ENCODE measurements at regions of chr9 and their contacts with region 1.

Region 1: DNA sequence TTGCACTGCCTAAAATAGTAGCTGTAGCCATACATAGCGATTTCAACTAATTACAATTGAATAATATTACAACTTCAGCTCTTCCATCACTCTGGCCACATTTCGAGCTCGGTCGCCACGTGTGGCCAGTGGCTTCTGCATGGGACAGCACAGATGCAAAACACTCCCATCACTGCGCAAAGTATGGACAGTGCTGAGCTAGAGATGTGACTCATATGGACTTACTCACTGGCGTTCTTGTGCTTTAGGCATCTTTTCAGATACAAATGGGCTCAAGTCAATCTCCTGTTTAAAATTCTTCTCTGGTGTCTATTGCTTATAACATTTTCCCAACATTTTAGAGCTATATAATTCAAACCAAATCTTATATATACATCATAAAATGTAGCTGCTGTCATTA is 222.7 kb downstream of the ELAVL2 start:
- DNase-seq: no peak
- ATAC-seq: no peak
- H3K4me3 Mint-ChIP-seq: no peak overlapping the region
- H3K27ac Mint-ChIP-seq: no peak overlapping the region
- H3K4me1 Mint-ChIP-seq: no peaks in the 10 kb centered on the region
- H3K27me3 Mint-ChIP-seq: no peaks in the 10 kb centered on the region
- CTCF ChIP-seq: no peak

Region 2: GRCh38 chr9:23375511-23375910 is 227.8 kb before region 1 on chr9:
- CTCF ChIA-PET with region 1: no interaction called
- POLR2A ChIA-PET with region 1: no interaction called
- intact Hi-C with region 1: no loop called
- DNase-seq: no peak
- ATAC-seq: no peak
- H3K4me3 Mint-ChIP-seq: no peak overlapping the region
- H3K27ac Mint-ChIP-seq: no peak overlapping the region
- H3K4me1 Mint-ChIP-seq: no peaks in the 10 kb centered on the region
- H3K27me3 Mint-ChIP-seq: no peaks in the 10 kb centered on the region
- CTCF ChIP-seq: no peak

Region 3: GRCh38 chr9:23663536-23663935 is 60.2 kb after region 1 on chr9:
- CTCF ChIA-PET with region 1: no interaction called
- POLR2A ChIA-PET with region 1: no interaction called
- intact Hi-C with region 1: loop called (anchors 10 kb)
- DNase-seq: no peak
- ATAC-seq: no peak
- H3K4me3 Mint-ChIP-seq: no peak overlapping the region
- H3K27ac Mint-ChIP-seq: no peak overlapping the region
- H3K4me1 Mint-ChIP-seq: no peaks in the 10 kb centered on the region
- H3K27me3 Mint-ChIP-seq: no peaks in the 10 kb centered on the region
- CTCF ChIP-seq: no peak